ENCODE measurements at regions of chr15 and their contacts with region 1.

Region 1: GRCh38 chr15:56918046-56918938 is at the start of gene TCF12:
- DNase-seq: peak; percentile 93 to 96 (median 94)
- ATAC-seq: peak; percentile 92
- H3K4me3 ChIP-seq: peak within 1 kb of the TSS; percentile 88
- H3K27ac ChIP-seq: peak within 1 kb of the TSS; percentile 92
- H3K4me1 ChIP-seq: peaks cover 8 to 20% of the 10 kb centered on the region in 2 experiments; a peak in 4 of 5 replicates
- H3K27me3 ChIP-seq: no peaks in the 10 kb centered on the region
- CTCF ChIP-seq: peak; percentile 43 to 65 (median 51)
- EP300 ChIP-seq: peak; percentile 49; the same call in 1 of the 2 replicates
- POLR2A ChIP-seq: peak; percentile 82
- RAD21 ChIP-seq: peak; percentile 55 to 66
- polyA plus RNA-seq, gene TCF12: 10.5 to 12.9 TPM

Region 2: DNA sequence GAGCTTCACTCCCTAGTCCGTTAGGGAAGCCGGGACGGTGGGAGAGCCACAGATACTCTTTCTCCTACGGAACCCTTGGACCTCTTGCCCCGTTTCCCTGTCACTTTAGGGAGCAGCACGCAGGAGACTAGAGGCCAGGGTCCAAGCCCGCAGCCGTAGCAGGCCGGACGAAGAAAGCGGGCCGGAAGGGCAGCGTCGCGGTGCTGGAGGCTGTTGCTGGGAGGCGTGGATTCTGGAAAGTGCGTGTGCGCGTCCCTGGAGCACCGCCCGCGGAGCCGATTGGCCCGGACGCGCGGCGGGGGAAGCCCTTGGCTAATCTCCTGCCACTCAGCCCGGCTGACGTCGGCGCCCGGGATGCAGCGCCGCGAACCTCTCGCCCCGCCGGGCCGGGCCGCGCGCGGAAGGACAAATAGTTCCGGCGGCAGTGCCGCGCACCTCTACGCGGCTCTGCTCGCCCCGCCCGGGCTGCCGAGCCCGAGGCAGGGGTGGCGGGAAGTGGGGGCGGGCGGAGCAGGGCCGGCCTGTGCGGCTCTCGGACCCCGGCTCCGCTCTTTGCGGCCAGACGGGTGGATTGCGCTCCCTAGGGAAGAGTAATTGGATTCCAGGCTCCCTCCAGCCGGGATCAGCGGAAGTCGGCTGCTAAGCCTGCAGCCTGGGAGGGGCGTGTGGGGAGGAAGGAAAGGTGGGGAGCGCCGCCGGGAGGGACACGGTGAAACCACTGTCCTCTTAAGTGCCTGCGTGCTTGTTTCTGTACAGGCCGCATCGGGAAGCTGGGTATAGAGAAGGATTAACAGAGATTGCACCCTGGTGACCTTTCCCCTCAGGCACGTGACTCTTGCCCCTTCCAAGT is 31.1 kb before region 1 on chr15:
- CTCF ChIA-PET with region 1: interaction called, 3 read pairs
- POLR2A ChIA-PET with region 1: interaction called, 5 read pairs
- in situ Hi-C with region 1: no loop called
- intact Hi-C with region 1: loop called (anchors 1 kb)
- DNase-seq: peak; percentile 94 to 95 (median 94)
- ATAC-seq: peak; percentile 97
- H3K4me3 ChIP-seq: peak overlapping the region; percentile 70
- H3K27ac ChIP-seq: peak overlapping the region; percentile 91
- H3K4me1 ChIP-seq: peaks cover 8 to 37% of the 10 kb centered on the region in 2 experiments
- H3K27me3 ChIP-seq: no peaks in the 10 kb centered on the region
- CTCF ChIP-seq: peak in 1 of 3 experiments; percentile 34; a peak in 2 of 6 replicates
- EP300 ChIP-seq: no peak
- POLR2A ChIP-seq: peak; percentile 86
- RAD21 ChIP-seq: peak; percentile 14 to 30; a peak in 2 of 4 replicates

Region 3: GRCh38 chr15:56929399-56929798 is 11.1 kb after region 1 on chr15:
- CTCF ChIA-PET with region 1: no interaction called
- POLR2A ChIA-PET with region 1: interaction called, 26 read pairs
- in situ Hi-C with region 1: no loop called
- intact Hi-C with region 1: no loop called
- DNase-seq: peak; percentile 18 to 37 (median 26)
- ATAC-seq: peak; percentile 52
- H3K4me3 ChIP-seq: no peak overlapping the region
- H3K27ac ChIP-seq: peak overlapping the region; percentile 24; the same call in 1 of the 3 replicates
- H3K4me1 ChIP-seq: peaks cover 0 to 23% of the 10 kb centered on the region in 2 experiments; a peak in 3 of 5 replicates
- H3K27me3 ChIP-seq: no peaks in the 10 kb centered on the region
- CTCF ChIP-seq: no peak
- EP300 ChIP-seq: no peak
- POLR2A ChIP-seq: no peak
- RAD21 ChIP-seq: no peak

Region 4: GRCh38 chr15:56971571-56971970 is 53.3 kb after region 1 on chr15:
- CTCF ChIA-PET with region 1: no interaction called
- POLR2A ChIA-PET with region 1: no interaction called
- in situ Hi-C with region 1: no loop called
- intact Hi-C with region 1: loop called (anchors 5 kb)
- DNase-seq: no peak
- ATAC-seq: peak; percentile 9
- H3K4me3 ChIP-seq: no peak overlapping the region
- H3K27ac ChIP-seq: peak overlapping the region; percentile 75
- H3K4me1 ChIP-seq: peaks cover 6 to 31% of the 10 kb centered on the region in 2 experiments
- H3K27me3 ChIP-seq: no peaks in the 10 kb centered on the region
- CTCF ChIP-seq: no peak
- EP300 ChIP-seq: no peak
- POLR2A ChIP-seq: no peak
- RAD21 ChIP-seq: no peak

Region 5: GRCh38 chr15:57138349-57138788 is 220.1 kb after region 1 on chr15:
- CTCF ChIA-PET with region 1: no interaction called
- POLR2A ChIA-PET with region 1: no interaction called
- in situ Hi-C with region 1: no loop called
- intact Hi-C with region 1: loop called (anchors 5 kb)
- DNase-seq: peak; percentile 44 to 65 (median 54)
- ATAC-seq: peak; percentile 96
- H3K4me3 ChIP-seq: no peak overlapping the region
- H3K27ac ChIP-seq: no peak overlapping the region
- H3K4me1 ChIP-seq: peaks cover 0 to 5% of the 10 kb centered on the region in 2 experiments; a peak in 2 of 5 replicates
- H3K27me3 ChIP-seq: no peaks in the 10 kb centered on the region
- CTCF ChIP-seq: peak; percentile 58 to 77 (median 69)
- EP300 ChIP-seq: no peak
- POLR2A ChIP-seq: no peak
- RAD21 ChIP-seq: peak; percentile 34 to 57; a peak in 2 of 4 replicates

Region 6: GRCh38 chr15:57213862-57214261 is 295.6 kb after region 1 on chr15:
- CTCF ChIA-PET with region 1: interaction called, 3 read pairs
- POLR2A ChIA-PET with region 1: no interaction called
- in situ Hi-C with region 1: no loop called
- intact Hi-C with region 1: loop called (anchors 5 kb)
- DNase-seq: peak in 2 of 4 experiments; percentile 9 to 46
- ATAC-seq: peak; percentile 82
- H3K4me3 ChIP-seq: no peak overlapping the region
- H3K27ac ChIP-seq: no peak overlapping the region
- H3K4me1 ChIP-seq: peaks cover 0 to 8% of the 10 kb centered on the region in 2 experiments; a peak in 2 of 5 replicates
- H3K27me3 ChIP-seq: no peaks in the 10 kb centered on the region
- CTCF ChIP-seq: peak; percentile 34 to 72 (median 58); a peak in 5 of 6 replicates
- EP300 ChIP-seq: no peak
- POLR2A ChIP-seq: no peak
- RAD21 ChIP-seq: peak; percentile 70 to 78